ENCODE measurements at regions of chr1 and their contacts with region 1.

Region 1: DNA sequence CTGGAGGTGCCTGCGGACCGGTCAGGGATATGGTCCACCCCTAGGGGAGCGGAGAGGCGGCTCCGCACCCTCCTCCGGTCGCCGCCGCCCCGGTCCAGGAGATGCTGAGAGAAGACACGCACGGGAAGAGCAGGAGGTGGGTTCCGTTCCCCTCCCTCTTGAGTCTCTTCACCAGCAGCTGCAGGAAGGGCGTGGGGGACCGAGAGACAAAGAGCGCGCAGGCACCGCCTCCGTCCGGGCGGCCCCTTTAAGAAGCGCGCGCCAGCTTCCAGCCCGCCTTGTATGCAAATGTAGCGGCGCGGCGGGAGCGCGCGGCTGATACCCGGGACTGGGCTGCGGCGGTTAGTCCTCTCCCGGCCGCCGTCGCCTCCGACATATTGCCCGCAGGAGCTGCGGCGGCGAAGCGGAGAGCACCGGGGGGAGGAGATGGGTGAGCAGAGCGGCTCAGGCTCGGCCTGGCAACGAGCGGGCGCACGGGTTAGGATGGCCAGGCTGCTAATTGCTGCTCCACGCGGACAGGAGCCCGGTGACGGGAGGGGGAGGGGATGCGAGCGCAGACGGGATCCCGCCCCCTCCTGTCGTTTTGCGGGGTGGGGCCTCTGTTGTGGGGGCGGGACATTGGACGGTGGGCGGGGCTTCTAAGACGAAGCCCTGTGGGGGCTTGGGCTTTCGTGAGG is at the start of gene TMEM39B:
- DNase-seq: peak; percentile 93
- H3K4me3 Mint-ChIP-seq: peak within 1 kb of the TSS; percentile 92
- H3K27ac Mint-ChIP-seq: peak within 1 kb of the TSS; percentile 95
- H3K4me1 Mint-ChIP-seq: peaks cover 45% of the 10 kb centered on the region
- H3K27me3 Mint-ChIP-seq: no peaks in the 10 kb centered on the region
- total RNA-seq, gene TMEM39B: 34.2 and 38.8 TPM in 2 replicates

Region 2: DNA sequence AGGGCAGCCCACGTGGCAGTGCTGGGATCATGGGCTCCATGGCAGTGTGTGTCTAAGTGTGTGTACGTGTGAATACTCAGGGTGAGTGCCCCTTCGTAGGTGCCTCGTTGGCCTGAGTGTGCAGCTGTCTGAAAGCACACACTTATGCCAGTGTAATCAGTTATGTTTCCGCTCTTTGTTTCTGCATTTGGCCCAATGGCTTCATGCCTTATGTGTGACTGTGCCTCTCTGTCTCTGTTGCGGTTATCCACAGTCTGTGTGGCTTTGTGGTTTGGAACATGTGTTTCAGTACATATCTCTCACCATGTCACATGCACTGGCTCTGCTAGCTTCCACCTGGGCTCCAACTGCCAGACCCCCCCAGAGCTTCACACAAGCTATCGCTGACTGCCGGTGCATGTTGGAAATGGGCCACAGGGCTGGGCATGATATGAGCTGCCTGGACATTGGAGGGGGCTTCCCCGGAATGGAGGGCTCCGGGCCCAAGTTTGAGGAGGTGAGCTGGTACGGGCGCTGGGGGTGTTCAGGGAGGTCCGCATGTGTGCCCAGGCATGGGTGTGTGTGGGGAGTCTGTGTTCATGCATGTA is 566.8 kb before region 1 on chr1:
- intact Hi-C with region 1: no loop called
- DNase-seq: peak; percentile 39
- H3K4me3 Mint-ChIP-seq: peak overlapping the region; percentile 6
- H3K27ac Mint-ChIP-seq: peak overlapping the region; percentile 40
- H3K4me1 Mint-ChIP-seq: peaks cover 36% of the 10 kb centered on the region
- H3K27me3 Mint-ChIP-seq: peaks cover 5% of the 10 kb centered on the region

Region 3: GRCh38 chr1:31644560-31645273 is 428.0 kb before region 1 on chr1 and contains the start of gene PEF1:
- intact Hi-C with region 1: loop called (anchors 1 kb)
- DNase-seq: peak; percentile 98
- H3K4me3 Mint-ChIP-seq: peak within 1 kb of the TSS; percentile 96
- H3K27ac Mint-ChIP-seq: peak within 1 kb of the TSS; percentile 100
- H3K4me1 Mint-ChIP-seq: peaks cover 21% of the 10 kb centered on the region
- H3K27me3 Mint-ChIP-seq: peaks cover 2% of the 10 kb centered on the region
- total RNA-seq, gene PEF1: 57.6 and 66.1 TPM in 2 replicates

Region 4: DNA sequence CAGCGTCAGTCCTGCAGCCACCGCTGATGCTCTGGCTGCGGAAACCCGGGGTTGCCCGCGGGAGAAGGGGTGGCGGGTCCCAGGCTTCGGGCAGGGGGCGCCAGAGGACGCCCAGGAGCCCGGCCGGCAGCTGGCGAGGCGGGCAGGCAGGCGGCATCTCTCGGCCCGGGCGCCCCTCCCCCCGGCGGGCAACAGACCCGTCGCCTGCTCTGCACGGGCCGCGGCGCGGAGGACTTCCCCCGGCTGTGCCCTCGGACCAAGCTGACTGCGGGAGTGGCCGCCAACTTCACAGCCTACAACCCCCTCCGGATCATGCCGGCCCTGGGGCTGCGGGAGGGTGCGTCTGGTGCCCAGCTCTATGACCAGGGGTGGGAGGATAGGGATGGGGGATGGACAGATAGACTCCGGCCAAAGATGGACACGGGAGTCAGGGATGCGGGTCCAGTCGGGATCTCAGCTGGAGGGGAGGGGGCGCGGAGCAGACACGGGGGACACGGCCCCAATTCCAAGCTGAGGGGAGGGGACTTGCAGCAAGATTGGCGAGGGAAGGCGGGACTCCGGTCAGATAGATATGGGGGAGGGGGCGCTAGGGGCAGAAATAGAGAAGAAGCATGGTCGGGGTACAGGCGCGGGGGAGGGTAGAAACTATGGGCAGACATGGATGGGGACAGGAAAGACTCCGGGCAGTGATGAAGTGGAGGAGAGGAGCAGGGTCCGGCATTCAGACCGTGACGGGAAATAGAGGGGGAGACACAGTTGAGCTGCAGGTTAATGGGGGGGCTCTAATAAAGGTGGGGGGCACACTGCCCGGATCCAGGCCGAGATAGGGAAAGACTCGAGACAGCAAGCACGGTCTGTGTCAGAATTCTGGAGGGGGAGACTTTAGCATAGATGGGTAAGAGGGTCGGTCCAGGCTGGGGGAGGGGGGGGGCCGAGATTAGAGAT is 309.8 kb before region 1 on chr1:
- intact Hi-C with region 1: no loop called
- DNase-seq: peak; percentile 42
- H3K4me3 Mint-ChIP-seq: peak overlapping the region; percentile 65
- H3K27ac Mint-ChIP-seq: no peak overlapping the region
- H3K4me1 Mint-ChIP-seq: peaks cover 25% of the 10 kb centered on the region
- H3K27me3 Mint-ChIP-seq: peaks cover 60% of the 10 kb centered on the region

Region 5: DNA sequence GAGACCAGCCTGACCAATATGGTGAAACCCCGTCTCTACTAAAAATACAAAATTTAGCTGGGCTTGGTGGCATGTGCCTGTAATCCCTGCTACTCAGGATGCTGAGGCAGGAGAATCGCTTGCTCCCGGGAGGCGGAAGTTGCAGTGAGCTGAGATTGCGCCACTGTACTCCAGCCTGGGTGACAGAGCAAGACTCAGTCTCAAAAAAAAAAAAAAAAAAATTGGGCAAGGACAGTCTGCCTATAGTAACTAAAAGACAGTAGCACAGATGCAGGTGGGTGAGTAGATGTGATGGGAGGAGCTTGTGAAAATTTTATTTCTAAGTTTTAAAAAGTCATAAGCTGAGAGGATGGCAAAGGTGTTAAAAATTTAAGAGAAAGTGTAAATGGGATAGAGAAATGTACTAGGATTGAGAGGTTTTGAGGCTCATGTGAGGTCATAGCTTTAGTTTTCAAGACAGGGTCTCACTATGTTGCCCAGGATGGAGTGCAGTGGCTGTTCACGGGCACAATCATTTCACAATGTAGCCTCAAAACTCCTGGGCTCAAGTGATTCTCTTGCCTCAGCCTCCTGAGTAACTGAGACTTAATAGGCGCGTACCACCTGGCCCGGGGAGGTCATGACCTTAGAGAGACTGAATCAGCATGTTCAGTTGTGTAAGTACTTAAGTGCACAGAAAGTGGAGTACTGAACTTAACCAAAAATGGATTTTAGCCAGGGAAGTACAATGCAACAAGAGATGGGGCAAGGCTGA is 168.2 kb before region 1 on chr1:
- intact Hi-C with region 1: no loop called
- DNase-seq: no peak
- H3K4me3 Mint-ChIP-seq: no peak overlapping the region
- H3K27ac Mint-ChIP-seq: peak overlapping the region; percentile 10
- H3K4me1 Mint-ChIP-seq: peaks cover 10% of the 10 kb centered on the region
- H3K27me3 Mint-ChIP-seq: no peaks in the 10 kb centered on the region

Region 6: GRCh38 chr1:31938174-31938950 is 134.4 kb before region 1 on chr1 and contains the start of gene PTP4A2:
- intact Hi-C with region 1: loop called (anchors 5 kb)
- DNase-seq: peak; percentile 88
- H3K4me3 Mint-ChIP-seq: peak within 1 kb of the TSS; percentile 100
- H3K27ac Mint-ChIP-seq: peak within 1 kb of the TSS; percentile 99
- H3K4me1 Mint-ChIP-seq: peaks cover 63% of the 10 kb centered on the region
- H3K27me3 Mint-ChIP-seq: no peaks in the 10 kb centered on the region
- total RNA-seq, gene PTP4A2: 390 and 421 TPM in 2 replicates

Region 7: DNA sequence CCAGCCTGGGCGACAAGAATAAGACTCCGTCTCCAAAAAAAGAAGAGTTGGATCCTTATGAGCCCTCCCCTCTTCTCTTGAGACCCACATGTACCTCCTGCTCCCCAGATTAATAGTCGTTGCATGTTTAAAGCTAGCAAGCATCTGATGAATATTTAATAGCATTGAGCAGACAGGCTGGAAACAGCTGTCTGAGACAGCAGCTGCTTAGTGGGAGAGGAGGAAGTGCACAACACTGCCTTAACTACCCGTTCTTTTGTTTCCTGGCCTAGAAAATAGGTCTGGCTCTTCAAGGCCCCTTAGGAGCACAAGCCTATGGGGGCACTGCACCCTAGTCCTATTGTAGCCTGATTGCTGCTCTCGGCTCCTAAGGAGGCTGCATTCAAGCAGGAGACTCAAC is 17.3 kb before region 1 on chr1:
- intact Hi-C with region 1: no loop called
- DNase-seq: no peak
- H3K4me3 Mint-ChIP-seq: no peak overlapping the region
- H3K27ac Mint-ChIP-seq: no peak overlapping the region
- H3K4me1 Mint-ChIP-seq: no peaks in the 10 kb centered on the region
- H3K27me3 Mint-ChIP-seq: no peaks in the 10 kb centered on the region

Region 8: GRCh38 chr1:32142446-32143301 is 69.9 kb after region 1 on chr1:
- intact Hi-C with region 1: loop called (anchors 1 kb)
- DNase-seq: no peak
- H3K4me3 Mint-ChIP-seq: no peak overlapping the region
- H3K27ac Mint-ChIP-seq: no peak overlapping the region
- H3K4me1 Mint-ChIP-seq: peaks cover 39% of the 10 kb centered on the region
- H3K27me3 Mint-ChIP-seq: no peaks in the 10 kb centered on the region

Region 9: DNA sequence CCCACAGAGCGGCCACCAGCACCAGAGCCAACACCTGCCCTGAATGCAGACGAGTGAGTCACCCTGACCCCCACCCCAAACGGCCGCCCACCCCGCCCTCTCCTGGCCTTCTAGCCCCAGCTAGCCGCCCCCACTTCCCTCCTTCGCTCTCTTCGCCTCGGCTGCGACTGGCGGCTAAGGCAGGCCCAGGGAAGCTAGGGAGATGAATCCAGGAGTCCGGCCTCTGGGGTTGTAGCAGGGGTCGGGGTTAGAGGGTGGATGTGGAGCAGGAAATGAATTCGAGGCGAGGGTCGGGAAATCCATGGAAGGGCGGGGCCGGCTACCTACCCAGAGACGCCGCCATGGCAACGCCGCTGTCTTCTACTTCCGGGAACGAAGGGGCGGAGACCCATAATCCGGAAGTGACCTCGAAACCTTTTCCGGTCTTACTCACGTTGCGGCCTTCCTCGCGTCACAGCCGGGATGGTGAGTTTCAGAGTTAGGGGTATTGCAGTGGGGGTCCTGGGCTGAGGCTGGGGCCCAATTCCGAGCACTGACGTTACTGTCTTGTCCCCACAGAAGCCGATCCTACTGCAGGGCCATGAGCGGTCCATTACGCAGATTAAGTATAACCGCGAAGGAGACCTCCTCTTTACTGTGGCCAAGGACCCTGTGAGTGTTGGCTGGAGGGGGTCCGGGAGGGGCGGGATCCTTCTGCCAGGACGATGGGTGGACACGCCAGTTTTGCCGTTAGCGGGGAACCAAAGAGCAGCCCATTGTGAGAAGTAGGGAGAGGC is 149.4 kb after region 1 on chr1 and contains the starts of genes EIF3I and TMEM234:
- intact Hi-C with region 1: loop called (anchors 1 kb)
- DNase-seq: peak; percentile 89
- H3K4me3 Mint-ChIP-seq: peak within 1 kb of the TSS; percentile 98
- H3K27ac Mint-ChIP-seq: peak within 1 kb of the TSS; percentile 95
- H3K4me1 Mint-ChIP-seq: peaks cover 25% of the 10 kb centered on the region
- H3K27me3 Mint-ChIP-seq: no peaks in the 10 kb centered on the region
- total RNA-seq, gene EIF3I: 297 TPM in 2 replicates
- total RNA-seq, gene TMEM234: 13.5 and 15.0 TPM in 2 replicates

Region 10: DNA sequence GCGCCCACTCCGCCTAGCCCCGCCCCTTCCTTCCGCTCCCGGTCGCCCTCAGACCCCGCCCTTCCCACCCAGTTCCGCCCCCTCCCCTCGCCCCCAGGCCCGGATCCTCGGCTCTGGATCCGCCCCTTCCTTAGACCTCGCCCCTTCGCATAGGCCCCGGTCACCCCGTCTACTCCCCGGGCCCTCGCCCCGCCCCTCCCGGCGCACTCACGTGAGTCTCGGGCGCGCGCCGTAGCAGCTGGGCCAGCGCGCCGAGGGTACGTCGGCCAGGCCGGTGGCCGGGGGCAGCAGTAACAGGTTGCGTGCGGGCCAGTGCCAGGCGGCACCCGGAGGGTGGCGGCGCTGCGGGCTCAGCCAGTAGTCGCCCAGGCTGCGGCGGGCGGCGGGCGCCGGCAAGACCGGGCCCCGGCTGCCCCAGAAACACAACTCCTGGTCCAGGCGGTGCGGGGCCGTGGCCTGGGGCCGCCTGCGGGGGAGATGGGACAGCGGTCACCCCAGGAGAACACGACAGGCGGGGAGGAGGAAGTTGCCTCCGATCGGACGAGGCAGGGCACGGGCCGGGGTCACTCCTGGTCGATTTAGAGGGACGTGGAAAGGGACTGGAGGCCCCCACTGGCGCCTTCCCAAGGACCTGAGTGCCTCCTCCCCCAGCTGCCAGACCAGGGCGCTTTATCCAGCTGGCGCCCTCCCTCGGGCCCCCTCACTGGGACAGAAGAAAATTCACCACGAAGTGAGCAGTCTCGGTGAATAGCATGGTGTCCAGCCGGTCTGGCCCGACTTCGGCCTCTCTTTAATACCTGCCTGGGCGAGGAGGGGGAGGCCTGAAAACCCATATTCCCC is 278.9 kb after region 1 on chr1:
- intact Hi-C with region 1: loop called (anchors 1 kb)
- DNase-seq: peak; percentile 89
- H3K4me3 Mint-ChIP-seq: peak overlapping the region; percentile 82
- H3K27ac Mint-ChIP-seq: peak overlapping the region; percentile 53
- H3K4me1 Mint-ChIP-seq: peaks cover 35% of the 10 kb centered on the region
- H3K27me3 Mint-ChIP-seq: peaks cover 6% of the 10 kb centered on the region

Region 11: DNA sequence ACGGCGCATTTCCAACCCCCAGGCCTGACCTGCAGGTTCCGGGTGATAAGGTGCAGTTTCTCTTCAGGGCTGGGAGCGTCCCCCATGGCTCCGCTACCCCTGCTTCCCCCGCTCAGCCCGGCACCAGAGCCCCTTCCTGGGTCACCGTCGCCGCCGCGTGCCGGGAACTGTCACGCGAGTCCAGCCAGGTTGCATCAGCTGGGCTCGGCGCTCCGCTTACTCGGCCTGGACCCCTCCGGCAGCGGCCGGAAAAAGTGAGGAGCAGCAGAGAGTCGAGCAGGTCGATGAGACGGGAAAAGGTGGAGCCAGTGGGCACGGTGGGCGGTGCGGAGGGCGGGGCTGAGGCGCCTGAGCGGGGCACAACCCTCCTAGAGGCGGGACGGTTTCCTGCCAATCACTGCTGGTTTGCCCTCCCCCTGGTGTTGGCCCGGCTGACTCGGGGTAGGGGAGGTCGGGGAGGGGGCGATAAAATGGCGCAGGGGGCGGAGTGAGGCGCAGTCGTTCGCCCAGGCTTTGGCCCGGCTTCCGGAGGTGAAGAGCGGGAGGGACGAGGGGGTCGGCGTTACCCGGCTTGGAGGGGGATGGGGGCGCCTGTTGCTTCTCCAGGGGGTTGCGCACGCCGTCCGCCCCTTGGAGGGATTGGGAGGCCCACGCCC is 744.5 kb after region 1 on chr1 and contains the starts of genes S100PBP and YARS1:
- intact Hi-C with region 1: loop called (anchors 2 kb)
- DNase-seq: peak; percentile 100
- H3K4me3 Mint-ChIP-seq: peak within 1 kb of the TSS; percentile 97
- H3K27ac Mint-ChIP-seq: peak within 1 kb of the TSS; percentile 97
- H3K4me1 Mint-ChIP-seq: peaks cover 53% of the 10 kb centered on the region
- H3K27me3 Mint-ChIP-seq: no peaks in the 10 kb centered on the region
- total RNA-seq, gene S100PBP: 48.8 and 55.8 TPM in 2 replicates
- total RNA-seq, gene YARS1: 205 and 225 TPM in 2 replicates

Measured in activated T-helper 1 cell treated with anti-CD3 and anti-CD28 coated beads, Interleukin-12 subunit alpha, Interleukin-12 subunit beta, Interleukin-2, Interleukin-4 antibody, amounts not matched to agents 30 ng/mL and 10 ng/mL and 1 ng/mL, durations not matched to agents 14 hours and 24 hours and 36 hours (primary cell).